ENCODE measurements at regions of chr1 and their contacts with region 1.

Region 1: DNA sequence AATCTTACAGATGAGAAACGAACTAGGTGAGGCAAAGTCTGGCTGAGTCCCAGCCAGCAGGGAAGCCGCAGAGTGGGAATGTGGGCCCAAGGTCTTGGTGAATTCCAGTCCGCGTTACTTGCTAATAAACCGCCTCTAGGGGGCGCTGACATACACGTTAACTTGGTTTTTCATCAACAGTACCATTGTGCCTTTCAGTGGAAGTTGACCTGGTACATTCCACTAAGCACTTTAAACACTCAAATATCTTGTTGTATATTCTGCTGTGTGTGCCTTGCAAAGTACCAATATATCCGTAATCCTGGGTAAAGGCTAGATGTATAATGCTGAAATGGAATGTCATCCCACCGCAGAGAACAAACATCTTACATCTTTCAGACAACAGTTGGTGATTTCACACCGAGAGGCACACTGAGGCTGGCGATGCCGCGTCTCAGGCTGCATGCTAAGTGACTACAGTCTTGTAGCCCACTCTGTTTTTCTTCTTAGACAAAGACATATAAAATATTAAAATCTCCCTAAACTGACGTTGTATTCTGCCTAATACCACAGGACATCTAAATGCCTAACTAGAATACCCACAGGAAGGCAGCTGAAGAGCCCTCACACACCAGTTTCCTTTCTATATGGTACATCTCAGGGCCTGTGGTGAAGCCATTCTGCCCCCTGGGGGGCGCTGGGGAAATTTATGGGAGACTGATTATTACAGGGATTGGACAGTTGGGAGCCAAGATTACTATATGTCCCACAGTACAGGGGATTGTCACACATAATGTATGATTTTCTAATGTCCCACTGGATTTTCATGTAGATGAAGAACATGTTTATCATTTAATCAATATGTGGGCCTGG is 49.2 kb upstream of the C1orf198 start:
- DNase-seq: peak; percentile 77
- ATAC-seq: peak; percentile 95

Region 2: GRCh38 chr1:230791986-230792564 is 125.4 kb before region 1 on chr1:
- intact Hi-C with region 1: no loop called
- DNase-seq: no peak
- ATAC-seq: no peak

Region 3: DNA sequence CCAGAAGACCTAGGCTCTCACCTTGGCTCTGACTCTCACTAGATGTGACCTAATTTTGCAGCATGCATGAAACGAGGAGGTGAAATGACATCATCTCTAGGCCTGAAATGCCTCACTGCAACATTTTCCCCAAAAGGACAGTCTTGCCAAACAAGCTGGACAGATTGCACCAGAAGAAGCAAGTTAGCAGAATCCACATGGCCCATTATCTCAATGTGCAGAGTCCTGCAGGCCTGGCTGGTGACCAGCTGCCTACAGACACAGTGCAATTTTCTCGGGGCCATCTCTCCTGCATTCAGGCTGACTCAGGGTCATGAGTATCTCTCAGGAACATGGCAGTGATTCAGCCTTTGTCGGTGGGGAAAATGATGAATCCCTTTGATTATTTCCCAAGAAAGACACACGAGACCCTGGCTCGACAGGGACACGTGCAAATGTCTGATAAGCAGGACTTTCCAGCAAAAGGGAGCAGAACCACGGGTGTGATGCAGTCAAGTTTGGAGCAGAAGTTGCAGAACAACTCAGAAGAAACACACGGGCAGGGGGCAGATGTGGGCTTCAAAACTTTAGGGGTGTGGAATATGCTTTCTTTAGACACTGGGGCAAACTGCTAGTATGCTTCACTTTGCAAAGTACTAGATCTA is 283.0 kb after region 1 on chr1:
- intact Hi-C with region 1: no loop called
- DNase-seq: no peak
- ATAC-seq: no peak

Region 4: GRCh38 chr1:231211005-231211857 is 293.7 kb after region 1 on chr1:
- intact Hi-C with region 1: loop called (anchors 2 kb)
- DNase-seq: peak; percentile 82
- ATAC-seq: peak; percentile 94

Measured in Right ventricle myocardium superior (tissue), 1 donor.